ENCODE measurements at regions of chr10 and their contacts with region 1.

Region 1: DNA sequence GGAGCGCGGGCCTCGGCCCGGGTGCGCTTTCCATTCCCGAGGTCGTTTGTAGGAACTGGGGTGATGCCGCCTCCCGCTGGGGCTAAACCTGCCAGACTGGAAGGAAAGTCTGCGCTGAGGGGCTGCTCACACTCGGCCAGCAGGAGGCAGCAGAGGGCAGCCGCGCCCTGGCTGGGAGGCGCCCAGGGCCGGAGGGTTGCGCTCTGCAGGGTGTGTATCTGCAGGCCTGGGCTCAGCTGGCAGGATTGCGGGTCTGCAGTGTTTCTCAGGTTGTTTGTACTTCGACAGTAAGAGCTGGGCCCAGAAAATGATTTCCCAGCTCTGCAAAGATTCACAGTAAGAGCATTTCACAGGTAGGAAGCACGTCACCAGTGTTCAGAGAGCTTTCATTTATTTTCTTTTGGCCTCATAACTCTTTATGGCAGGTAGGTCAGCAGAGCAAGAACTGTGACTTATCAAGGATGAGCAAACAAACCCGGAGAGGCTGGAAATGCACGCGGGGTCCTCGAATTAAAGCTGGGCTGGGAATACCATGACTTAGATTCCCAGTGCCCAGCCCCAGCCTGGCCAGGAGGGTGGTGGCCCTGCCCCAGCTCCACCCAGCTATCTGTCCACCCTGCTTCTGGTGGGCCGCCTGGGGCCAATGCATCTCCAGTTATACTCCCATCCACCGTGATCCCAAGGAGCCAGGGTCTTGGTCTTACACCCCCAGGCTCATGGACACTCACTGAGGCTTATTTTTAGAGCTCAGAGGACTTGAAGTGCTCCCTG is 15.2 kb upstream of the PPP2R2D start:
- DNase-seq: peak; percentile 65
- H3K4me3 ChIP-seq: no peak overlapping the region
- H3K27ac ChIP-seq: no peak overlapping the region
- H3K4me1 ChIP-seq: peaks cover 15% of the 10 kb centered on the region
- H3K27me3 ChIP-seq: no peaks in the 10 kb centered on the region
- CTCF ChIP-seq: peak; percentile 96 to 99

Region 2: GRCh38 chr10:131900350-131901146 is 15.0 kb after region 1 on chr10 and contains the start of gene PPP2R2D:
- CTCF ChIA-PET with region 1: interaction called, 11 read pairs
- dilution Hi-C with region 1: no loop called
- in situ Hi-C with region 1: no loop called
- intact Hi-C with region 1: loop called (anchors 1 kb)
- DNase-seq: peak; percentile 95
- H3K4me3 ChIP-seq: peak within 1 kb of the TSS; percentile 78 to 95 (median 91)
- H3K27ac ChIP-seq: peak within 1 kb of the TSS; percentile 93
- H3K4me1 ChIP-seq: peaks cover 30% of the 10 kb centered on the region
- H3K27me3 ChIP-seq: no peaks in the 10 kb centered on the region
- CTCF ChIP-seq: no peak
- total RNA-seq, gene PPP2R2D: 33.7 to 36.5 TPM

Region 3: GRCh38 chr10:131943021-131943814 is 57.6 kb after region 1 on chr10:
- CTCF ChIA-PET with region 1: no interaction called
- dilution Hi-C with region 1: no loop called
- in situ Hi-C with region 1: no loop called
- intact Hi-C with region 1: loop called (anchors 1 kb)
- DNase-seq: no peak
- H3K4me3 ChIP-seq: no peak overlapping the region
- H3K27ac ChIP-seq: no peak overlapping the region
- H3K4me1 ChIP-seq: peaks cover 16% of the 10 kb centered on the region
- H3K27me3 ChIP-seq: no peaks in the 10 kb centered on the region
- CTCF ChIP-seq: peak; percentile 39 to 61

Region 4: GRCh38 chr10:131961777-131962662 is 76.4 kb after region 1 on chr10:
- CTCF ChIA-PET with region 1: no interaction called
- dilution Hi-C with region 1: no loop called
- in situ Hi-C with region 1: no loop called
- intact Hi-C with region 1: loop called (anchors 5 kb)
- DNase-seq: no peak
- H3K4me3 ChIP-seq: no peak overlapping the region
- H3K27ac ChIP-seq: no peak overlapping the region
- H3K4me1 ChIP-seq: no peaks in the 10 kb centered on the region
- H3K27me3 ChIP-seq: no peaks in the 10 kb centered on the region
- CTCF ChIP-seq: no peak

Region 5: DNA sequence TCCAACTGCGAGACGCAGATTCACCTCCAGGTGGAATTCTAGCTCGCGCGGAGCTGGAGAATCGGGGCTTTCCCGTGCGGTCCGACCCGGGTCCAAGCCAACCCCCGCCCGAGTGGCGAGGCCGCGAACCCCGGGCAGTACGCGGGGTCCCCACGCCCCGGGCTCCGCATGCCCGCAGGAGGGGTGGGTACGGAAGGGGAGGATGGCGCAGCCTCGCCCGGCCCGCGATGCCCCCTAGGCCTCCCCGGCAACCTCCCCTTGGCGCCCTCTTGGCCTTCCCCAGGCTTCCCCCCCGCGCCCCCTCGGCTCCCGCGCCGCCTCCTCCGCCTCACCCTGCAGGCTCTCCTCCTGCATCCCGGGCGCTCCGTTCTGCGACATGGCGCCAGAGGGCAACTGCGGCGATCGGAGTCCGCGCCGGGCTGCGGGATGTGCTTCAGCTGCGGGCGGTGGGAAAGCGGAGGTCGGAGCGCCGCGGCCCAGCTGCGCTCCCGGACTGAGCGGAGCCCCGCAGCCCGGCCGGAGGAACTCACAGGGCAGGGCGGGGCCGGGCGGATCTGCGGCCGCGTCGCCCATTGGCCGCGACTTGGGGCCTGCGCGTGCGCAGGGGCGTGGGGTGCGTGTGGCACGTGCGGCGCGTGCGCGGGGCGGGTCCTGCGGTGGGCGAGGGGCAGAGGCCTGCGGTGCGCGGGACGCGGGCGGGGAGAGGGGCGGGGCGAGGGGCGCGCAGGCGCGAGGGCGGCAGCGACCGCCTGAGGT is 96.0 kb after region 1 on chr10 and contains the start of gene BNIP3:
- CTCF ChIA-PET with region 1: no interaction called
- dilution Hi-C with region 1: no loop called
- in situ Hi-C with region 1: loop called in 1 of 2 experiments (anchors 5 kb)
- intact Hi-C with region 1: loop called (anchors 5 kb)
- DNase-seq: peak; percentile 89
- H3K4me3 ChIP-seq: peak within 1 kb of the TSS; percentile 58 to 90 (median 79)
- H3K27ac ChIP-seq: peak within 1 kb of the TSS; percentile 64
- H3K4me1 ChIP-seq: peaks cover 14% of the 10 kb centered on the region
- H3K27me3 ChIP-seq: no peaks in the 10 kb centered on the region
- CTCF ChIP-seq: peak in 1 of 2 donors; percentile 26
- total RNA-seq, gene BNIP3: 50.8 to 65.2 TPM

Region 6: DNA sequence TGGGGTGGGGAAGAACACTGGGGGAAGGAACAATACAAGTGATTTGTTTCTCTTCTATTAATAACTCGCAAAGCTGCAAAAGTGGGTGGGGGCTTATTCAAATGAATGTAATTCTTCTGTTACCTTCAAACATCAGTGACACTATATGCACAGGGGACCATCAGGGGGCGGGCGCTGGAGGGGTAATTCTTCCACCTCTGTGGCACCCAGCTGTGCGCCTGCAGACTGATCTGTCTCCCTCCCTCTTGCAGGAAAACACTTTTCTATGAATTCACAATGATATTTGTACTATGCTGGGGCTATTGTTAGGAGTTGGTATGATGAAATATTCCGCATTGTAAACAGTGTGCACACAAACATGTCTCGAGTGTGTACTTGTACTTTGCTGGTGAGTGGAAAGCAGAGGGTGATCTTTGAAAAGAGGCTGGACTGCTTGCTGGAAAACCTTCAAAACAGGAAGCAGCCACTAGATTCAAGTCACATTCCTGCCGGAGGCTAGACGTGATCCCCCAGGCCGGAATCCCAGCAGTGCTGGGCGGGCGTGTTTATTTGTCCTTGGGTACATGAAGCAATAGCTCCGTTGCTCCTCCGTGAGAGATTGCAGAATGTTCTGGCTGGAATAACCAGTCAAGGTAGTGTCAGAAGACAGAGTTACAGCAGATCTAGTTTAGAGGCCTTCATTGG is 111.9 kb after region 1 on chr10:
- CTCF ChIA-PET with region 1: no interaction called
- dilution Hi-C with region 1: no loop called
- in situ Hi-C with region 1: no loop called
- intact Hi-C with region 1: no loop called
- DNase-seq: no peak
- H3K4me3 ChIP-seq: no peak overlapping the region
- H3K27ac ChIP-seq: no peak overlapping the region
- H3K4me1 ChIP-seq: peaks cover 4% of the 10 kb centered on the region
- H3K27me3 ChIP-seq: no peaks in the 10 kb centered on the region
- CTCF ChIP-seq: no peak

Region 7: DNA sequence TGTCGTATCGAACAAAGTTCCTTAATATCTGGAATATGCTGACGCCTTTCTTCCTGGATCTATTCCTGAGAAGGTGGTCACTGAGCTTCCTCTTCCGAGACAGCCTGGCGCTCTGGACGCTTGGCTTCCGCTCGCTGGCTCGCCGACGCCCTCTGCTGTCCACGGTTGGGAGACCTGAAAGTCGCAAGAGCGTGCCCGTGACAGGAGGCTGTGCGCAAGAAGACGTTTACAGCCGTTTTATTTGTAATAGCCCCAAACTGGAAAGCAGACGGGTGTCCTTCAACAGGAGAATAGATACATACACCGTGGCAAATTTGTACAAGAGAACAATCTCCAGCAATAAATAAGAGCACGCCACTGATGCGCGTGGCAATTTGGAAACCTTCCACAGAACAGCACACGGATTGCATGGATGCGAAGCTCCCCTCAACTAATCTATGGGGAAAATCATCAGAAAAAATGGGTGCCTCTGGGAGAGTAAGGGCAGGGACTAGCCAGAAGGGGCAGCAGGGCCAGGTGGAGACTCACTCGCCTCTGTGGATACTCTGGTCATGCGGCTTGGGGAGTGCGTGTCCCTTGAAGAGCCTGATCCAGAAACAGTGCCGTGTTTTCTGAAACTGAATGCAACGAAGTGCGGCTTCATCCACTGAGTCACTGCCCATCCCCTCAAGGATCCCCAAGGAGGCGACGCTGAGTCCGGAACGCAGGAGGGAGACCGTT is 137.7 kb after region 1 on chr10:
- CTCF ChIA-PET with region 1: interaction called, 5 read pairs
- dilution Hi-C with region 1: no loop called
- in situ Hi-C with region 1: loop called (anchors 5 kb)
- intact Hi-C with region 1: loop called (anchors 1 kb)
- DNase-seq: peak; percentile 52
- H3K4me3 ChIP-seq: peak overlapping the region; percentile 2 to 34 (median 32)
- H3K27ac ChIP-seq: no peak overlapping the region
- H3K4me1 ChIP-seq: peaks cover 4% of the 10 kb centered on the region
- H3K27me3 ChIP-seq: no peaks in the 10 kb centered on the region
- CTCF ChIP-seq: peak; percentile 69 to 92

Region 8: DNA sequence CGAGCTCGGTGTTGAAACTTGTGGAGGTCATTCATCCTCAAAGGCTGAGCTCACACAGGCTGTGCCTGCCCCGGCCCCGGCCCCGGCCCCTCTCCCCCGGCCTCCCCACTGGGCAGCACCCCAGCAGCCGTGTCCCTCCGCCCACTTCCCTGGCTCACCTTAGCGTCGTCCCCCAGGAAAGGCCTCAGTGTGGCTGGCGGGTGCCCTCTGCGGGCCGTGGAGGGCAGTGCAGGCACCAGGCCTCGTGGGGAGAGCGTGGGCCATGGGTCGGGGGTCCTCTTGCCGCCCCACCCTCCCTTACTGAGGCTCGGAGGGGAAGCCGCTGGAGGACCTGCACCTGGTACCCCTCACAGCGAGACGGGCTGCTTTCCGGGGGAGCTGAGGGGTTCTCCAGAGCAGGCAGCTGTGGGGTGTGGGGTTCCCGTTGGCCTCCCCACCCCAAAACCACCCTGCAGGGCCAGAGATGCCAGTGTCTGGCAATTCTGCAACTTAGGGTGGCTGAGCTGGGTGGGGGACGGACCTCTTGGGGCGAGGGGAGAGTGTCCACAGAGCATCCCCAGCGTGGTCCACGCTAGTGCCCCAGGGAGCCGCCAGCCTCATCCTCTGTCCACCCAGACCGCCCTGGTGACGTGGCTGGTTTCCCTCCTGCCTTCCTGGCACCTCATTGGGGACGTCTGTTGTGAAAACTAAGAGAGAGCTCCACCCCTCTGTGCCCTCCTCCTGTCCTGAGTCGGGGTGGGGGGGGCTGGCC is 257.0 kb after region 1 on chr10:
- CTCF ChIA-PET with region 1: interaction called, 5 read pairs
- dilution Hi-C with region 1: no loop called
- in situ Hi-C with region 1: loop called in 1 of 2 experiments (anchors 10 kb)
- intact Hi-C with region 1: loop called (anchors 1 kb)
- DNase-seq: peak; percentile 8
- H3K4me3 ChIP-seq: no peak overlapping the region
- H3K27ac ChIP-seq: no peak overlapping the region
- H3K4me1 ChIP-seq: no peaks in the 10 kb centered on the region
- H3K27me3 ChIP-seq: no peaks in the 10 kb centered on the region
- CTCF ChIP-seq: peak; percentile 70 to 83